Cardiac septum (tissue), 1 donor: ENCODE measurements at regions of chr1 and their contacts with region 1.

Region 1: DNA sequence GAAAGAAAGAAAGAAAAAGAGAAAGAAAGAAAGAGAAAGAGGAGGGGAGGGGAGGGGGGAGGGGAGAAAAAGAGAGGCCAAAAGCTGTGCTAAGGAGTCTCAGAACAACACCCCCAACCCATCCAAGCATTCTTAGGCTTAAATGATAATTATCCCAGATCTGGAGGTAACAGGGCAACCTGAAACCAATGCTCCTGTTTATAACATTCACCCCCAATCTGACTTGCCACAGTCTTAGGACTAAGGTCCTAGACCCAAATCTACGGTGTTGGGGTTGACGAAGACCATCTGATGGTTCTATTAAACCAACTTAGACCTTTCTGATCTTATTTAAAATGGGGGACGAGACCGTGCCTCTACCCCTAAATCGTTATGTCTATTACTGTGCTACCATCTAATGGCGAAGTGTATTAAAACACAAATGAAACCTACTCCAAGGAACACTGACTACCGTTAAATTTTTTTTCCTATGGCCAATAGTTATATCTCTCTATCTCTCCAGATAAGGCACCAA is 119.3 kb upstream of the CDC42BPA start:
- DNase-seq: no peak

Region 2: GRCh38 chr1:226378071-226378470 is 1059.5 kb before region 1 on chr1:
- intact Hi-C with region 1: no loop called
- DNase-seq: peak; percentile 46

Region 3: GRCh38 chr1:226912587-226913176 is 524.9 kb before region 1 on chr1:
- intact Hi-C with region 1: loop called (anchors 5 kb)
- DNase-seq: no peak

Region 4: GRCh38 chr1:227131193-227131592 is 306.4 kb before region 1 on chr1:
- intact Hi-C with region 1: loop called (anchors 5 kb)
- DNase-seq: no peak

Region 5: GRCh38 chr1:227210604-227211003 is 226.9 kb before region 1 on chr1:
- intact Hi-C with region 1: no loop called
- DNase-seq: no peak

Region 6: GRCh38 chr1:227234998-227235405 is 202.6 kb before region 1 on chr1:
- intact Hi-C with region 1: loop called (anchors 5 kb)
- DNase-seq: no peak

Region 7: GRCh38 chr1:227401562-227402342 is 35.8 kb before region 1 on chr1:
- intact Hi-C with region 1: no loop called
- DNase-seq: no peak